ENCODE measurements at regions of chr16 and their contacts with region 1.

Region 1: GRCh38 chr16:4116337-4117249 is at the start of gene ADCY9:
- DNase-seq: peak; percentile 68 to 88
- ATAC-seq: peak; percentile 70 to 89 (median 80)
- H3K4me3 ChIP-seq: peak within 1 kb of the TSS; percentile 56 to 80 (median 74)
- H3K27ac ChIP-seq: peak within 1 kb of the TSS; percentile 59 to 89 (median 86)
- H3K4me1 ChIP-seq: peaks cover 13 to 49% (median 44%) of the 10 kb centered on the region in 9 donors
- H3K27me3 ChIP-seq: no peaks in the 10 kb centered on the region
- CTCF ChIP-seq: peak in 1 of 9 donors; percentile 2
- total RNA-seq, gene ADCY9: 37.3 to 57.6 (median 43.4) TPM

Region 2: DNA sequence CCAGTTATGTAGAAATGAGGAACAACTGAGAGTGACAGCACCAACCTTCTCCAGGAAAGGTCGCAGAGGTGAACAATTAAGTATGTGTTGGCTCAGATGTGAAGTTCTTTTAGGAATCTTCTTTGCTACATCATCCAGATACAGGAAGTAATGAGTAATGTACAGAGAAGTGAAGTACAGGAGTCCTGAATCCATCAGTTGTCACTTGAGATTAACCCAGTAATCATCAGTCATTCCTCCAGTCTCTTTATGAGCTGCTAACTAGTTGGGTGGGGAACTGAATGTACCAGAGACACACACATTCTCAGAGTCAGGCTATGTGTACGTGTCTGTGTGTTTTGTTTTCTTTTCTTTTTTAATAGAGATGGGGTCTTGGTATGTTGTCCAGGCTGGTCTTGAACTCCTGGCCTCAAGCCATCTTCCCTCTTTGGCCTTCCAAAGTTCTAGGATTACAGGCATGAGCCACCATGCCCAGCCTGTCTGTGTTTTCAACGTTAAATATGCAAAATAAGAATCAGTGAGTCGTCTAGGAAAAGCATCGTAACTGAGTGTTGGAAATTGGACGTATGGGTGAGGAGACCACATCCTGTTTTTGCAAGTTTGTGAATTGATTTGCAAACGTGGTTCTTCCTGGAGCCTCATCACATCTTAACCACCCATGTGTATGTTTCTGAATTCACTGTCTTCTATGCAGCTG is 901.5 kb before region 1 on chr16:
- intact Hi-C with region 1: no loop called
- DNase-seq: no peak
- ATAC-seq: no peak
- H3K4me3 ChIP-seq: no peak overlapping the region
- H3K27ac ChIP-seq: peak overlapping the region in 1 of 10 donors; percentile 69
- H3K4me1 ChIP-seq: peaks cover 0 to 6% (median 0%) of the 10 kb centered on the region in 9 donors
- H3K27me3 ChIP-seq: peaks cover 0 to 7% (median 0%) of the 10 kb centered on the region in 7 donors
- CTCF ChIP-seq: no peak

Region 3: GRCh38 chr16:3945751-3946603 is 170.6 kb before region 1 on chr16:
- intact Hi-C with region 1: loop called in 1 of 10 experiments (anchors 10 kb)
- DNase-seq: peak in 1 of 2 donors; percentile 34
- ATAC-seq: no peak
- H3K4me3 ChIP-seq: no peak overlapping the region
- H3K27ac ChIP-seq: peak overlapping the region in 2 of 10 donors; percentile 6 to 53
- H3K4me1 ChIP-seq: peaks cover 6 to 39% (median 31%) of the 10 kb centered on the region in 9 donors
- H3K27me3 ChIP-seq: no peaks in the 10 kb centered on the region
- CTCF ChIP-seq: no peak

Region 4: GRCh38 chr16:3999479-4000325 is 116.9 kb before region 1 on chr16:
- intact Hi-C with region 1: loop called in 3 of 10 experiments (anchors 5 to 10 kb)
- DNase-seq: peak; percentile 63 to 67
- ATAC-seq: peak; percentile 32 to 79 (median 68)
- H3K4me3 ChIP-seq: no peak overlapping the region
- H3K27ac ChIP-seq: peak overlapping the region in 8 of 10 donors; percentile 31 to 67 (median 62)
- H3K4me1 ChIP-seq: peaks cover 0 to 31% (median 14%) of the 10 kb centered on the region in 9 donors
- H3K27me3 ChIP-seq: no peaks in the 10 kb centered on the region
- CTCF ChIP-seq: no peak

Region 5: DNA sequence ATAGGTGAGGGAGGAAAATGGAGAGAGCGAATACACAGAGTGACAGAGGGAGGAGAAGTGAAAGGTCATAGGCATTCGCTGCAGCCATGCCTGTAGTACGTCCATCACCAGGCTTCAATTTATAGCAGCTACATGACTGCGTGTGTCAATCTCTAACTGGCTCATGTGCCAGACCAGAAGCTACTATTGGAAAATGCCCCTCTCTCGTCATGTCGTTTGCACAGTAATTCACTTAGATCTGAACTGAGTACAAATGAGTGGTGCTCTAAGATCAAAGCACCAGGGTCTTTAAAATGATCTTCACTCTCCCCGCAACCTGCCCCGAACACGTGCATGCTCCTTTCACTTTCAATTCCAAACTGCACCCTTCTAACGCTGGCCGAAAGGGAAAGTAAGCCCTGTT is 51.6 kb before region 1 on chr16:
- intact Hi-C with region 1: no loop called
- DNase-seq: no peak
- ATAC-seq: peak in 5 of 8 donors; percentile 17 to 69 (median 52)
- H3K4me3 ChIP-seq: peak overlapping the region in 5 of 10 donors; percentile 14 to 34 (median 25)
- H3K27ac ChIP-seq: peak overlapping the region in 2 of 10 donors; percentile 24 to 32
- H3K4me1 ChIP-seq: peaks cover 0 to 11% (median 3%) of the 10 kb centered on the region in 9 donors
- H3K27me3 ChIP-seq: no peaks in the 10 kb centered on the region
- CTCF ChIP-seq: no peak

Region 6: GRCh38 chr16:4090351-4090851 is 26.2 kb before region 1 on chr16:
- intact Hi-C with region 1: loop called in 1 of 10 experiments (anchors 2 kb)
- DNase-seq: peak; percentile 44 to 65
- ATAC-seq: peak; percentile 61 to 88 (median 76)
- H3K4me3 ChIP-seq: peak overlapping the region in 3 of 10 donors; percentile 3 to 13 (median 10)
- H3K27ac ChIP-seq: peak overlapping the region; percentile 37 to 83 (median 68)
- H3K4me1 ChIP-seq: peaks cover 8 to 75% (median 36%) of the 10 kb centered on the region in 9 donors
- H3K27me3 ChIP-seq: no peaks in the 10 kb centered on the region
- CTCF ChIP-seq: no peak

Region 7: GRCh38 chr16:4244254-4245076 is 127.9 kb after region 1 on chr16:
- intact Hi-C with region 1: loop called in 1 of 10 experiments (anchors 10 kb)
- DNase-seq: no peak
- ATAC-seq: no peak
- H3K4me3 ChIP-seq: no peak overlapping the region
- H3K27ac ChIP-seq: no peak overlapping the region
- H3K4me1 ChIP-seq: peaks cover 0 to 28% (median 0%) of the 10 kb centered on the region in 9 donors
- H3K27me3 ChIP-seq: no peaks in the 10 kb centered on the region
- CTCF ChIP-seq: no peak

Measured in heart right ventricle (tissue), 16 donors.